Activated CD4-positive, alpha-beta memory T cell treated with anti-CD3 and anti-CD28 coated beads, Interleukin-2, amount 10 ng/mL, durations not matched to agents 7 days and 5 days (primary cell): ENCODE measurements at regions of chr4 and their contacts with region 1.

Region 1: DNA sequence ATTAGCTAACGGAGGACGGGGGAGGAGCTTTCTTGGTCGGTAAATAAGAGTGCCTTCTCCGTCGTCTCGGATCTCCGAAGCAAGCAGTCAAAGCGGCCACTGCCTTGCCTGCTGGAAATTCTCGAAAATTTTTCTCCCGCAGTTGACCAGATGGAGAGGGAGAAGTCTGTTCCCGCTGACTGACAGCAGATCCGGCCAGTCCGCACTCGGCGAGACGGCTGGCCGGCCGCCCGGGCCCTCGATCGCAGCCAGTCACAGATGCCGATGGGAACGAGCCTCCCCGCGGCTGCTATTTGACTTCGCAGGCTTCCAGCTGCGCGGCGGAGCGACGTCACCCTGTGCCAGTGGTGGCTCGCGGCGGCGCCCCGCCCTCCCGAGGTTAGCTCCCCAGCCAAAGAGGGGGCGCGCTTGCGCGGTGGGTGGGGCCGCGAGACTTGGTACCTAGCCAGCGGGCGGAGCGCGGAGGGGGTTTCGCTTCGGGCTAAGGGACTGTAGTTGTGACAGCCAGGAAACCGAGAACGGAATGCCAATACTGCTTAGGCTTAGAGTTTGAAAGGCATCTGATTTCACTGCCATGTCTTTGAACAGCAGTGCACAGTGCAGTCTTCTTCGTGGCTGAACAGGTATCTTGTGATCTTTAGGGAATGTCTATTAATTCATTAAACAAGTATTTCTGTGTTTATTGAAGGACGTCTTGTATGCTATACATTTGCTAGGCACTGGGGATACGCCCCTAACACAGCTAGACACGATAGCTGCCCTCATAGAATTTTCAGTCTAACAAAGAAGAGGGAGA is at the start of gene PPM1K:
- DNase-seq: peak; percentile 100
- H3K4me3 Mint-ChIP-seq: peak within 1 kb of the TSS; percentile 96
- H3K27ac Mint-ChIP-seq: peak within 1 kb of the TSS; percentile 100
- H3K4me1 Mint-ChIP-seq: peaks cover 50% of the 10 kb centered on the region
- H3K27me3 Mint-ChIP-seq: peaks cover 1% of the 10 kb centered on the region
- total RNA-seq, gene PPM1K: 96.9 to 101 TPM

Region 2: GRCh38 chr4:88255111-88255510 is 29.5 kb before region 1 on chr4:
- CTCF ChIA-PET with region 1: no interaction called
- POLR2A ChIA-PET with region 1: interaction called, 16 read pairs
- DNase-seq: no peak
- H3K4me3 Mint-ChIP-seq: no peak overlapping the region
- H3K27ac Mint-ChIP-seq: no peak overlapping the region
- H3K4me1 Mint-ChIP-seq: no peaks in the 10 kb centered on the region
- H3K27me3 Mint-ChIP-seq: peaks cover 1% of the 10 kb centered on the region

Region 3: DNA sequence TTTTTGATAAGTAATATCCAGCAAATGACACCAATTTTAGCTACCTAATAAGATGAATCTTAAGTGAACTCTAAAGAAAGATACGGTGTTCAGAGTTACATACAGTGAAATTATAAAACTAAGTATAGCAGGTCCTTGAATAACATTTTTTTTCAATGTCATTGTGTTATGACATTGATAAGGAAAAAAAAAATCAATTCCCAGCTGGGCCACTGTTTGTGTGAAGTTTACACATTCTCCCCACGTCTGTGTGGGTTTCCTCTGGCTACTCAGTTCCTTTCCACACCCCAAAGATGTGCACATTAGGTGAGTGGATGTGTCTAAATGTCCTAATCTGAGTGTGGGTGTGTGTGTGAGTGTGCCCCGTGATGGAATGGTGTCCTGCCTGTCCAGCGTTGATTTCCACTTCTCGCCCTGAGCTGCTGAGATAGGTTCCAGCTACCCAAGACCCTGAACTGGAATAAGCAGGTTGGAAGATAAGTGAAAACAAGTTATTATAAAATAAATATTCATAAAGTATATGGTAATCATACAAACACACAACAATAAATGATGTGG is 30.9 kb after region 1 on chr4:
- CTCF ChIA-PET with region 1: interaction called, 14 read pairs
- POLR2A ChIA-PET with region 1: interaction called, 113 read pairs
- DNase-seq: no peak
- H3K4me3 Mint-ChIP-seq: no peak overlapping the region
- H3K27ac Mint-ChIP-seq: no peak overlapping the region
- H3K4me1 Mint-ChIP-seq: peaks cover 23% of the 10 kb centered on the region
- H3K27me3 Mint-ChIP-seq: peaks cover 15% of the 10 kb centered on the region

Region 4: DNA sequence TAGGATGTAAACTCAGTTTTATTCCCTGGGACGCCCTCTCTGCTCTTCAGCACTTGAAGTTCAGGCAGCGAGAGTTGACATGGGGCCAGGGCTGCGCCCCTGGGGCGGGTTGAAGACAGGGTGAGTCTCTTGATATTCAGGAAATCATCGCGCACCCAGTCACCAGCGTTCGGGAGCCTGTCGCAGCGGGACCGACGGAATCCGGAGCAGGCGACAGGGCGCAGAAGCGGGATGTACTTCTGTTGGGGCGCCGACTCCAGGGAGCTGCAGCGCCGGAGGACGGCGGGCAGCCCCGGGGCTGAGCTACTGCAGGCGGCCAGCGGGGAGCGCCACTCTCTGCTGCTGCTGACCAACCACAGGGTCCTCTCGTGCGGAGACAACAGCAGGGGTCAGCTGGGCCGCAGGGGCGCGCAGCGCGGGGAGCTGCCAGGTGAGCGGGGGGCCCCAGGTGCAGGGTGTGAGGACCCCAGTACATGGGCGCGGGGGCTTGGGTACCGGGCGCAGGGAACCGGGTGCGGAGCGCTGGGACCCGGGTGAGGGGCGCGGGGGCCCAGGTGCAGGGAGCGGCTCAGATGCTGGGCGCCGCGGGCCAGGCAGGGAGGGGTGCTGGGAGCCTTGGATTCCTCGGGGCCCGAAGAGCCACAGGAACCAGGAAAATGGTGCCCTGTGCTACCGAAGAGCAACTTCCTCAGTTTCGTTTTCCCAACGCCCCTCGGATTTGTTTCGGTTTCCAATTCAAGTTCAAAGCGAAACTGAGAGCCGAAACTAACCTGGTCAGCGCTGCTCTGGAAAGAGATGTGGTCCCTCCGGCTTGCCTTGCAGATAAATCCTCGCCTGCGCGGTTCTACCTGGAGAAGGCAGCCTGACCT is 94.3 kb after region 1 on chr4 and contains the start of gene HERC6:
- CTCF ChIA-PET with region 1: interaction called, 27 read pairs
- POLR2A ChIA-PET with region 1: interaction called, 54 read pairs
- DNase-seq: peak; percentile 93
- H3K4me3 Mint-ChIP-seq: peak within 1 kb of the TSS; percentile 79
- H3K27ac Mint-ChIP-seq: peak within 1 kb of the TSS; percentile 92
- H3K4me1 Mint-ChIP-seq: peaks cover 61% of the 10 kb centered on the region
- H3K27me3 Mint-ChIP-seq: no peaks in the 10 kb centered on the region
- total RNA-seq, gene HERC6: 47.5 to 49.0 TPM

Region 5: GRCh38 chr4:88514557-88515511 is 230.2 kb after region 1 on chr4:
- CTCF ChIA-PET with region 1: interaction called, 26 read pairs
- POLR2A ChIA-PET with region 1: interaction called, 4 read pairs
- DNase-seq: no peak
- H3K4me3 Mint-ChIP-seq: no peak overlapping the region
- H3K27ac Mint-ChIP-seq: no peak overlapping the region
- H3K4me1 Mint-ChIP-seq: no peaks in the 10 kb centered on the region
- H3K27me3 Mint-ChIP-seq: peaks cover 2% of the 10 kb centered on the region

Region 6: GRCh38 chr4:88591787-88592599 is 307.4 kb after region 1 on chr4 and contains the start of gene HERC3:
- CTCF ChIA-PET with region 1: interaction called, 3 read pairs
- POLR2A ChIA-PET with region 1: interaction called, 17 read pairs
- DNase-seq: peak; percentile 89
- H3K4me3 Mint-ChIP-seq: peak within 1 kb of the TSS; percentile 94
- H3K27ac Mint-ChIP-seq: peak within 1 kb of the TSS; percentile 82
- H3K4me1 Mint-ChIP-seq: peaks cover 37% of the 10 kb centered on the region
- H3K27me3 Mint-ChIP-seq: peaks cover 9% of the 10 kb centered on the region
- total RNA-seq, gene HERC3: 36.9 to 41.9 TPM